ENCODE measurements at regions of chr2 and their contacts with region 1.

Region 1: GRCh38 chr2:227655454-227655853 is 11.2 kb upstream of the SCYGR5 start:
- DNase-seq: peak; percentile 95
- H3K4me3 Mint-ChIP-seq: no peak overlapping the region
- H3K27ac Mint-ChIP-seq: no peak overlapping the region
- H3K4me1 Mint-ChIP-seq: peaks cover 14% of the 10 kb centered on the region
- H3K27me3 Mint-ChIP-seq: no peaks in the 10 kb centered on the region
- CTCF ChIP-seq: no peak

Region 2: DNA sequence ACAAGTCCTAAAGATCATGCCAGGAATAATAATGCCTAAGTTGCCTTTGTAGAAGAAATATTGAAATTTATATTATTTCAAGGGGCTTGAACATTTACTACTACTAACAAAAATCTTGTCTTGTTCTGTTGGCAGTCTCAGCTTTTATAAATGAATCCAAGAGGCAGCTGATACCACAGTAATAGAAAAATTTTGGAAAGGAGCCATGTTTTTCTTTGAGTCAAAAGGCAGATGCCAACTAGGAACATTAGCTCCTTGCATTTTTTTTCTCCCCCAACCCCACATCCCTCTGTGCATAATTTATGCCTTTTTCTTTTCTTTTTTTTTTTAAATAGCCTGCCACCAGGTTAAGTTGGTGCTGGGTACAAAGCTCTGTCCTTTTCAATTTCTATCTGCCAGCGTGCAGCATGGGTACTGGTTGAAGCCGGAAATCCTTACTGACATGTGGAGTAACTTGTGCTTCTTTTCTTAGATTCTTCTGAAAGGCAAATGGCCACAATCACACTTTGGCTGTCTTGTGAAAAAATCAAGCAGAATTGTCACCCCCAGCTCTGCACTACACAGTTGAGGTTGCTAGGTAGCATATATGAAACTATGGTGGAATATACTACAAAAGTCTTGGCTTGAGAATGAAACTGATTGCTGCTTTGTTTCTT is 720.8 kb before region 1 on chr2:
- CTCF ChIA-PET with region 1: no interaction called
- POLR2A ChIA-PET with region 1: no interaction called
- intact Hi-C with region 1: no loop called
- DNase-seq: peak; percentile 6
- H3K4me3 Mint-ChIP-seq: no peak overlapping the region
- H3K27ac Mint-ChIP-seq: no peak overlapping the region
- H3K4me1 Mint-ChIP-seq: peaks cover 10% of the 10 kb centered on the region
- H3K27me3 Mint-ChIP-seq: no peaks in the 10 kb centered on the region
- CTCF ChIP-seq: no peak

Region 3: DNA sequence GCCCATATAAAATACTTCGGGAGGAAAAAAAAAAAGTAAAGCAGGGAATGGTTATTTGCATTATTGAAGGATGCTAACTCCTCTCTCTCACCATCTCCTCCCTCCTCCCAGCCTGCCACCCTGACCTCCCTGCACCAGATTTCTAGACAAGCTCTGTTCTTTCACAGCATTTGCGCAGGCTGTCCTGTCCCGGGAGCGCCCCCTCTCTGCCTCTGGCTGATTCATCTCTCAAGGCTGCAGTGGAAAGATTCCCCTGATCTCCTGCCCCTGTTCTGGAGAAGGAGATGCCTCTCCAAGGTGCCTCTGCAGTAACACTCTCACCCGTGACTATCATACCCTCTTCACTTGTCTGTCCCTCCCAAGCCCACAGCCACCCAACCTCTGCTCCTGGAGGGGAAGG is 529.9 kb before region 1 on chr2:
- CTCF ChIA-PET with region 1: no interaction called
- POLR2A ChIA-PET with region 1: no interaction called
- intact Hi-C with region 1: loop called (anchors 1 kb)
- DNase-seq: no peak
- H3K4me3 Mint-ChIP-seq: no peak overlapping the region
- H3K27ac Mint-ChIP-seq: no peak overlapping the region
- H3K4me1 Mint-ChIP-seq: peaks cover 5% of the 10 kb centered on the region
- H3K27me3 Mint-ChIP-seq: peaks cover 25% of the 10 kb centered on the region
- CTCF ChIP-seq: no peak

Region 4: DNA sequence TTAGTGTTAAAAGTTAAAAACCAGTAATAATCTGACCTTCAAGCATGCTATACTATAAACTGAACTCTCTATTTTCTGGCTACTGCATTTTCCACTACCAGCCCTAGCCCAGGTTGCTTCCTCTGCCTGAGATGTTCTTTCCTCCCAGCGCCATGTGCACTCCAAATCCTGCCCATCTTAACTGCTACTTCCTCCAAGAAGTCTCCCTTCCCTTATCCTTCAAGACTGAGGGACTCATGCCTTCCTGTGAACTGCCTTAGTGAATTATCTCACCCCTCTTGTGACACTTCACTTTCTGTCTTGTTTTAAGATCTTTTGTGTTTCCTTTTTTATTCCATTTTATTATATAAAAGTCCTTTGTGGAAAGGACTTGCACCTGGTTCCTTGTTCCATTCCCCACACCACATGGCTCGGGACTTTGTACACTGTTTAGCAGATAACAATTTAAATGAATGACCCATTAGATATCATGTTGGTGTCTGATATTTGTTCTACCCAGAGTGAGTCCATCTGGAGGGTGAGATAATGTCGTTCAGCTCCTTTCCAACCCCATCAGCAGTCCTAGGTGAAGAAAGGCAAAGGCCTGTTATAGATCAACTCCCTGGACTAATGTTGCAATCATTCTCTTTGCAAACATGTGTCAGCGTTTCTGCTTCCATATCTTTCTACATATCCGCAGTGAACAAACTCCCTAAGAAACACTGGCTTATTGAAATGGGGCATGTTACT is 204.4 kb before region 1 on chr2:
- CTCF ChIA-PET with region 1: no interaction called
- POLR2A ChIA-PET with region 1: no interaction called
- intact Hi-C with region 1: no loop called
- DNase-seq: no peak
- H3K4me3 Mint-ChIP-seq: no peak overlapping the region
- H3K27ac Mint-ChIP-seq: no peak overlapping the region
- H3K4me1 Mint-ChIP-seq: no peaks in the 10 kb centered on the region
- H3K27me3 Mint-ChIP-seq: no peaks in the 10 kb centered on the region
- CTCF ChIP-seq: no peak

Region 5: DNA sequence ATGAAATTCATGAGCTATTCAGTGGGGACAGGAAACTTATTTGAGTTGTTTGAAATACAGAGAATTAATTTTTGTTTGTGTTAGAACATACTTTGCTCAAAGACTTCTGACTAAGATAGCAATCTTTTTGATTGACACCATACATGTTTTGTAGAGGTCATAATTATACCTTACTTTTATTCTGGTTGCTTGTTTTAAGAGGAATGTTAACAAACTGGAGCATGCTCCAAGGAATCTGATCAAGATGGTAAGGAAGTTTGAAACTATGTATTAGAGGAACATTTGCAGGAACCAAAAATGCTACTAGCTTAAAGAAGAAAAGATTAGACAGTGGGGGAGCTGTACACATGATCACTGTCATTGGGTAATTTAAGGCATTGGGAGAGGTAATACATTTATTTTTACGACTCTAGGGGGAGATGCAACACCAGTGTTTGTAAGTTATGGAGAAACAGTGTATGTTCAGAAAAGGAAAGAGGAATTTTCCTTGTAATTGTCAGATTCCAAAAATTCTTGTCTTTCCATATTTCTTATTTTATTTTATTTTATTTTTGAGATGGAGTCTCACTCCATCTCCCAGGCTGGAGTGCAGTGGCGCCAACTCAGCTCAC is 175.5 kb before region 1 on chr2:
- CTCF ChIA-PET with region 1: interaction called, 13 read pairs
- POLR2A ChIA-PET with region 1: no interaction called
- intact Hi-C with region 1: loop called (anchors 2 kb)
- DNase-seq: peak; percentile 63
- H3K4me3 Mint-ChIP-seq: no peak overlapping the region
- H3K27ac Mint-ChIP-seq: peak overlapping the region; percentile 47
- H3K4me1 Mint-ChIP-seq: peaks cover 39% of the 10 kb centered on the region
- H3K27me3 Mint-ChIP-seq: no peaks in the 10 kb centered on the region
- CTCF ChIP-seq: peak; percentile 43

Region 6: GRCh38 chr2:227671170-227672060 is 16.0 kb after region 1 on chr2:
- CTCF ChIA-PET with region 1: interaction called, 14 read pairs
- POLR2A ChIA-PET with region 1: interaction called, 3 read pairs
- intact Hi-C with region 1: no loop called
- DNase-seq: peak; percentile 36
- H3K4me3 Mint-ChIP-seq: no peak overlapping the region
- H3K27ac Mint-ChIP-seq: no peak overlapping the region
- H3K4me1 Mint-ChIP-seq: no peaks in the 10 kb centered on the region
- H3K27me3 Mint-ChIP-seq: no peaks in the 10 kb centered on the region
- CTCF ChIP-seq: no peak

Region 7: GRCh38 chr2:227774011-227774624 is 118.7 kb after region 1 on chr2:
- CTCF ChIA-PET with region 1: interaction called, 34 read pairs
- POLR2A ChIA-PET with region 1: no interaction called
- intact Hi-C with region 1: no loop called
- DNase-seq: no peak
- H3K4me3 Mint-ChIP-seq: no peak overlapping the region
- H3K27ac Mint-ChIP-seq: no peak overlapping the region
- H3K4me1 Mint-ChIP-seq: no peaks in the 10 kb centered on the region
- H3K27me3 Mint-ChIP-seq: no peaks in the 10 kb centered on the region
- CTCF ChIP-seq: no peak

Region 8: DNA sequence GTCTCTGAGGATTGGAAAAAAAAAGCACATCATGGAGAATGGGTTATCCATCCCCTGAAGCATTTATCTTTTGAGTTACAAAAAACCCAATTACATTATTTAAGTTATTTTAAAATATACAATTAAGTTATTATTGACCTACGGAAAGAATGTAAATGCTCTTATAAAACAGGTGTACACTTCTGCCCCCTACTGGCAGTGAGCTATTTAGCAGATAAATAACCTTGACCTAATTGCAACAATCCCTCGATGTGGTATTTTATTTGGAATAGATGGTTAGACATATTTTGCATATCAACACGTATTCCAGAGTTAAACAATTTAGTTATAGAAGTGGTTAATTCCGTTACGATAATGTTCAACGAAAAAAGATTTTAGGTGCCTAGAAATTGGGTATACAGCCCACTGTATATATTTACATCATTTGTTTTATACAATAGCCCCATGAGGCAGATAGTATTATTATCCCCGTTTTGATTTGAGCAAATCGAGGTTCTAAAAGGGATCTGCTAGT is 206.8 kb after region 1 on chr2:
- CTCF ChIA-PET with region 1: interaction called, 36 read pairs
- POLR2A ChIA-PET with region 1: interaction called, 4 read pairs
- intact Hi-C with region 1: loop called (anchors 1 kb)
- DNase-seq: peak; percentile 80
- H3K4me3 Mint-ChIP-seq: peak overlapping the region; percentile 36
- H3K27ac Mint-ChIP-seq: peak overlapping the region; percentile 24
- H3K4me1 Mint-ChIP-seq: peaks cover 44% of the 10 kb centered on the region
- H3K27me3 Mint-ChIP-seq: no peaks in the 10 kb centered on the region
- CTCF ChIP-seq: peak; percentile 64

Region 9: DNA sequence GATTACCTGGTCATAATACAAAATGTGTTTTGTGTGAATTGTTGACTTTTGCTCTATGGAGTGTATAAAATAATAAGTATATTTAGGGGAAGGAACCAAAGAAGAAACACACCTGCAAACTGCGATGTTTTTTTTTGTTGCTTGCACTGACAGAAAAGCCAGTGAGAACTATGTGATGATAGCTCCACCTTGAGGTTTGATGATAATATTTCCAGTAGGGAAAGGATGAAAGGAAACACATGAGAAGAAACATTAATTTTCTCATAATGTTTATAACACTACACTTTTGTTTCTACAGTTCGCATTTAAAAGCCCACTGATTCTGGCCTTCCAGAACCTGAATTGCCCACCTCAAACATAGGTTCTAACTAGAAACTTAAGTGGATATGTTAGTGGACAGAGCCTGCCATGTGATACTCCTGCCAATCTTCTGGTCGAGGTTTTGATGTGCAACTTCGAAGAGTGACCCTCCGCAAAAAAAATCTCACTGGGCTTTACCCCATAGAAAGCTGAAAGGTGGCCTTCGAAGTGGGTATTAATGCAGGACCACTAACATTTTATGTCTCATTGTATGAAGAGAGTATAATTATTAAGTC is 1002.5 kb after region 1 on chr2:
- CTCF ChIA-PET with region 1: interaction called, 5 read pairs
- POLR2A ChIA-PET with region 1: no interaction called
- intact Hi-C with region 1: loop called (anchors 10 kb)
- DNase-seq: peak; percentile 68
- H3K4me3 Mint-ChIP-seq: no peak overlapping the region
- H3K27ac Mint-ChIP-seq: no peak overlapping the region
- H3K4me1 Mint-ChIP-seq: no peaks in the 10 kb centered on the region
- H3K27me3 Mint-ChIP-seq: peaks cover 71% of the 10 kb centered on the region
- CTCF ChIP-seq: peak; percentile 78